ENCODE measurements at regions of chr7 and their contacts with region 1.

Region 1: DNA sequence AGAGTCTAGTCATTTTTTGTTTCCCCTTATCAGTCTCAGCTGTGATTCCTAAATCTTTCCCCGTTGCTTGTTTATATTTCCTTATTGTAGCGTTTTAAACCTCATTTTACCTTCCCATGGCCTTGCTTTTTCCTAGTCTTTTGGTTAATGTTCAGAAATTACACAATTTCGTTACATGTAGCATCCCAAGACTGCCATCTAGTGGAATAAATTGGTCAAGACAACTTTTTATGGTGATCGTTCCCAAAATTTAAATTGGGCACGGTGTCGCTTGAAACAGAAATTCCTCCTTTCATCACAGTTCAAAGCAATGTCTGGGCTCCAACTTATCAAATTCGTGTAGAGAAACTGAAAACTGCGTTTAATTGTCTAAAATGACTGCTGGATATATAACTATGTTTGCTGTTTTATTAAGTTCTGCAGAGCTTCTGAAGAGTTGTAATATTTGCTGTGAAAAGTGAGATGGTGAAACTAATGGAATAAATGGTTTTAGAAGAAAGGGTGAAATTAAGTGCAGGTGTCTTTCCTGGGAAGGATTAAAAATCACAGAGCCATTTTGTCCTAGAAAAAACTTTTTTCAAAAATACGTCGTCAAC is 370.2 kb downstream of the PHF14 start:
- DNase-seq: peak; percentile 62
- H3K4me3 Mint-ChIP-seq: no peak overlapping the region
- H3K27ac Mint-ChIP-seq: no peak overlapping the region
- H3K4me1 Mint-ChIP-seq: peaks cover 12% of the 10 kb centered on the region
- H3K27me3 Mint-ChIP-seq: no peaks in the 10 kb centered on the region
- CTCF ChIP-seq: peak; percentile 62

Region 2: DNA sequence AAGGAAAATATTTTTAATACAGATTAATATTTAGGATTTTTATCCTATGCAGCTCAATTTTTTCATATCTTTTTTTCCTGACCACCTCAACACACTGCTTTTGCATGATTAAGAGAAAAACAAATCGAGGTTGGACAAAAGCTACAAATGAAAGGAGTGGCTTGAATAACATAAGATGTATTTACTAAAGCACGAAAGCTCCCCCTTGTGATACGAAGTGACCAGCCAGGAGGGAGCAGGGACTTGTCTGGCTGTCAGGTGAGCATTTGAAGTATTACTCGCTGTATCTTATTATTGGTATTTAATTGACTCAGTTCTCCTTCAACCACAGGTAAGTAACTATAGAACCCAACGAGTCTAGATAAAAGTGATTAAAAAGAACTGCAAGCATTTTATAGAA is 635.5 kb before region 1 on chr7:
- CTCF ChIA-PET with region 1: no interaction called
- POLR2A ChIA-PET with region 1: no interaction called
- intact Hi-C with region 1: loop called (anchors 10 kb)
- DNase-seq: peak; percentile 40
- H3K4me3 Mint-ChIP-seq: no peak overlapping the region
- H3K27ac Mint-ChIP-seq: no peak overlapping the region
- H3K4me1 Mint-ChIP-seq: no peaks in the 10 kb centered on the region
- H3K27me3 Mint-ChIP-seq: no peaks in the 10 kb centered on the region
- CTCF ChIP-seq: peak; percentile 30

Region 3: DNA sequence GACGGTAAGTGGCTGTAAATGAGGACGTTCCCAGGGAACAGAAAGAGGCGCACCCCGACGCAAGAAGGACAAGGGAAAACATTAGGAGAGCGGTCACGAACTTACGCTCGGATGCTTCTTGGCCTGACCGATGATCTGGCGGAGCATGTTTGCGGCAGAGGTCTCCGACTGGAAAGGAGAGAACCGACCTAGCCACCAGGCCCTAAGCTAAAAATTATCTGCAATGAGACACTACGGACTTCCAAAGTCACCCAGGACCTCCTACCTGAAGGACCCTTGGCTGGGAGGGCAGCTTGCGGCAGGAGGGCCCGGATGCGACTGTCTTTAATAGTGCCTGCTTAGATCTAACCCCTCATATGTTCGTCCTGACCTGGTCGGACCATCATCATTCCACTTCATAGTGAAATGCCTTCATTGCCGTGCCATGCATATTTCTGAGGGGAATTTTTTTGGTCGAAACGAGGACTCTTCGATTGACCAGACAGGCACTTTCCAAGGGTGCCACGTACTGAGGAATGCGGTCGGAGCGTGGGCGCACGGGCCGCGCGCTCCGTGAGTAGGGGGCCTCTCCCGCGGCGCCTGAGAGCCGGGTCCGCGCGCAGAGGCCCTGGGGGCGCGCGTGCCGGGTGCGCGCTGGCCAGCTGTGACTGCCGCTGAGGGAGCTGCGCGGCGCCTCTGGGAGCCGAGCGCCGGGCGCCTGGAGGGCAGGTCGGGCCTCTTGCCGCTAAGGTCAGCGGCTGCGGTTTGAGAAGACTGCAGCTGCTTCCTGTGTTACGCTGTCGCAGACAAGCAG is 403.8 kb before region 1 on chr7:
- CTCF ChIA-PET with region 1: interaction called, 4 read pairs
- POLR2A ChIA-PET with region 1: no interaction called
- intact Hi-C with region 1: loop called (anchors 2 kb)
- DNase-seq: peak; percentile 94
- H3K4me3 Mint-ChIP-seq: no peak overlapping the region
- H3K27ac Mint-ChIP-seq: no peak overlapping the region
- H3K4me1 Mint-ChIP-seq: peaks cover 3% of the 10 kb centered on the region
- H3K27me3 Mint-ChIP-seq: no peaks in the 10 kb centered on the region
- CTCF ChIP-seq: no peak

Region 4: GRCh38 chr7:11281953-11282352 is 62.0 kb before region 1 on chr7:
- CTCF ChIA-PET with region 1: no interaction called
- POLR2A ChIA-PET with region 1: no interaction called
- intact Hi-C with region 1: no loop called
- DNase-seq: no peak
- H3K4me3 Mint-ChIP-seq: no peak overlapping the region
- H3K27ac Mint-ChIP-seq: no peak overlapping the region
- H3K4me1 Mint-ChIP-seq: no peaks in the 10 kb centered on the region
- H3K27me3 Mint-ChIP-seq: no peaks in the 10 kb centered on the region
- CTCF ChIP-seq: no peak

Region 5: GRCh38 chr7:11355399-11356005 is 11.6 kb after region 1 on chr7:
- CTCF ChIA-PET with region 1: interaction called, 12 read pairs
- POLR2A ChIA-PET with region 1: interaction called, 3 read pairs
- intact Hi-C with region 1: no loop called
- DNase-seq: no peak
- H3K4me3 Mint-ChIP-seq: no peak overlapping the region
- H3K27ac Mint-ChIP-seq: no peak overlapping the region
- H3K4me1 Mint-ChIP-seq: no peaks in the 10 kb centered on the region
- H3K27me3 Mint-ChIP-seq: peaks cover 20% of the 10 kb centered on the region
- CTCF ChIP-seq: no peak